ENCODE measurements at regions of chr6 and their contacts with region 1.

Region 1: GRCh38 chr6:143842902-143843676 is at the start of gene LTV1:
- DNase-seq: peak; percentile 95 to 100 (median 98)

Region 2: DNA sequence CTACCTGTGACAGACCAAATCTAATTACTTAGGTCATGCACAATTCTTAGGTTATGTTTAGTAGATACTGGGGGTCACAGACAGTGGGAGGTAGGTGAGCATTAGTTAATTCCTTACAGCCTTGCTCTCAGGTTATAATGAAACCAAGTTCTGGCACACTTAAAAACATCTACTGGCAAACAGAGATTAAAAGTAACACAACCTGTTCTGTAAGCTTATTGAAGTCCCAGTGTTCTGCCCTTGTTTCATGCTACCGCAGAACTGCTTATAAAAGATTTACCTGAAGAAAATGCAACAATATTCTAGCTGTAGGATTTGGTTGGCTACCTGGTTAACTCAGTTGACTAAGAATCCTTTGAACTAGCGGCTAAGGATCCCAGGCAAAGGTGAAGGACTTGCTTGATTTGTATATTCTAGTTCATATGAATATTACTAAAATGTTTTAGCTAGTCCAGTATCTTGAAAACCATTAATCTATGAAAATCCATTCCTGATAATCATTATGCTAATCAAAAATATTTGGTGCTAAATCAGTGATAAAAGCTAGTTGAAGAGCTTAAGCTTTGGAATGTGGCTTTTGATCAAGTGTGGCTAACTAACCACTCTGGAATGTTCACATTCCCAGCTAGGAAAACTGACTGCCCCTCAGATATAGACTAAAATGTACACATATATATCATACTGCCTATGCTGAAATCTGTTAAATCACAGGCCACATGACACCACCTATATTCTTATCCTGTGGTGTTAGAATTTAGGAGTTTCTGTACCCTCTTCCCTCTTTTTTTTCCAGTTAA is 385.3 kb before region 1 on chr6:
- intact Hi-C with region 1: no loop called
- DNase-seq: no peak

Region 3: DNA sequence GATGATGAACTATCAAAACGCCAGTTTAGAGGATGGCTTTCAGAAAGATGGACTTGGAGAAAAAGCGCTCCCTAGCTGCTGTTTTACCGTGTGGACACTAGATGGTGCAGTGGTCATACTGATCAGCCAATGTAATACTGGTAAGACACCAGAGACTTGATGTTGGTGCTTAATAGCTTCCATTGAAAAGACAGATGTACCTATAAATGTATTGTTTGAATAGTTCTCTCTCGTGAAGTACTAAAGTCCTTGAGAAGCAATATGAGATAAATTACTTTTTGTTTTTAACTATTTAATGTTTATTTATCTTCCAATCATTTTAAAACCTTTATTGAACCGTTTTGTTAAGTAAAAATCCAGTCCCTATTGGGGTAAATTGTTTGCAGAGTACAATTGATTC is 267.6 kb before region 1 on chr6:
- intact Hi-C with region 1: loop called (anchors 10 kb)
- DNase-seq: peak in 4 of 10 donors; percentile 27 to 63 (median 43)

Region 4: DNA sequence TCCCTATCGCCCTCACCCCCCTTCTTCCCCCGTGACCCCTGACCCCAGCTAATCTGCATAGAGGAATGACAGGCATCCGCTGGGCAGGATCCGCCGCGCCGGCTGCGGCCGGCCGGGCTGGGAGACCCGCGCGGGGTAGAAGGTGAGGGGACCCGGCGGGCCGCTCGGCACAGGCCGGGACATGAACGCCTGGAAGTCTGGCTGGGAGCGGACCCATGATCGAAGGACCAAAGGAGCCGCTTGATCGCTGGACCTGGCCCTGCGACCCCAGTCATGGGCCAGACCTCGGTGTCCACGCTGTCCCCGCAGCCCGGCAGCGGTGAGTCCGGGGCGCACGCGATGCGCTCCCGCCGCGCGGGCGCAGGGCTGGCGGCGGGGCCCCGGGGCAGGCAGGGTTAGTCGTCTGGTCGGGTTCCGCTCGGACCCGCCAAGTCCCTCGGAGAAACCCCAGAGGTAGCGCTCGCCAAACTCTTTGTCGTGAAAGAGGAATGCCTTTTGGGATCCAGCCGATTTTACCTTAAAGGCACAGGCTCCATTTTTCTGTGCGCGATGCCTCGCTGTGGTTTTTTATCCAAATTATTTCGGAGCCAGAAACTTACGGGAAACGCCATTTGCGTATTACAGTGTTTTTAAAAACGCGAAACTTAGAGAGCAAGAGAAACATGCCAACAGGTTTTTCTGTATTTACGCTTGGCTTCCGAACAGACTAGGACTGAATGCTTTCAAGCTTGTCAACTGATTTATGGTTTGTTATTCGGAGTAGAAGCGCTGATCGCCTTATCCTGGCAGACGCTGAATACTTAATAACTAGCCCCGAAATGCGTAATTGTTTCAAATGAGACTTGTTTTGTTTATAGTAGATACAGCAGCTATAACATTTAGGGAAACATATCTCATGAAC is 164.9 kb before region 1 on chr6 and contains the start of gene PHACTR2:
- intact Hi-C with region 1: loop called (anchors 5 kb)
- DNase-seq: peak in 9 of 10 donors; percentile 30 to 90 (median 38)

Region 5: DNA sequence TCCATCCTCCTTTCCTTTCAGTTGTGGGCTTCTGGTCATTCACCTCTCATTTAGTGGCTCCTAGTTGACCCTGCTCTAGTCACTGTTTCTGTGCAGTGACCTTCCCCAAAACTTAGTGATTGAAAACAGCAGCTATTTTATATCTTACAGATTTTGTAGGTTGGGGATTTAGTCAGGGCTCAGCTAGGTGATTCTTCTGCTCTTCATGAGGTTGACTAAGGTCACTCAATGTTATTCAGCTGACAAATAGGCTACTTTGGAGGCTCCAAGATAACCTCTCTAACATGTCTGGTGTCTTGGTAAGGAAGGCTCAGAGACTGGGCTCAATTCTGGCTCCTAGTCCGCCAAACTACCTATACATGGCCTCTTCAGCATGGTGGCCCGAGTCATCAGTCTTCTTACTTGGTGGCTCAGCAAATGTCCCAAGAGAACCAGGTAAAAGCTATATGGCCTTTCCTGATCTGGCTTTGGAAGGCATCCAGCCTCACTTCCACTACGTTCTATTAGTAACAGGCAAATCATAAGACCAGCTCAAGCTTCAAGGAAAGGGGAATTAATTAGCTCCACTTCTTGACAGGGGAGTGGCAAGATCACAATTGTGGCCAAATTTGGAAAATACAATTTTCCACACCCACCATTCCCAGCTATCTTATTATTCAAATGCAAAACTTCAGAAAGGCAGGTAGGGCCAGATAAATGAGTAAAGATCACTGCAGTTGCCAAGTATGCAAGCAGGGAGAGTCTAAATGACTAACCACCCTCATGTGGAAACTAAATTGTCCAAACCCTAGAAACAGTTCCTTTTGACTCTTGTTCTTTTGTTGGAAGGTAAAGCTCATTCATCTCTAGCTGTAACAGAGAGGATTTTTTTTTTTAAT is 50.4 kb before region 1 on chr6:
- intact Hi-C with region 1: no loop called
- DNase-seq: no peak

Region 6: DNA sequence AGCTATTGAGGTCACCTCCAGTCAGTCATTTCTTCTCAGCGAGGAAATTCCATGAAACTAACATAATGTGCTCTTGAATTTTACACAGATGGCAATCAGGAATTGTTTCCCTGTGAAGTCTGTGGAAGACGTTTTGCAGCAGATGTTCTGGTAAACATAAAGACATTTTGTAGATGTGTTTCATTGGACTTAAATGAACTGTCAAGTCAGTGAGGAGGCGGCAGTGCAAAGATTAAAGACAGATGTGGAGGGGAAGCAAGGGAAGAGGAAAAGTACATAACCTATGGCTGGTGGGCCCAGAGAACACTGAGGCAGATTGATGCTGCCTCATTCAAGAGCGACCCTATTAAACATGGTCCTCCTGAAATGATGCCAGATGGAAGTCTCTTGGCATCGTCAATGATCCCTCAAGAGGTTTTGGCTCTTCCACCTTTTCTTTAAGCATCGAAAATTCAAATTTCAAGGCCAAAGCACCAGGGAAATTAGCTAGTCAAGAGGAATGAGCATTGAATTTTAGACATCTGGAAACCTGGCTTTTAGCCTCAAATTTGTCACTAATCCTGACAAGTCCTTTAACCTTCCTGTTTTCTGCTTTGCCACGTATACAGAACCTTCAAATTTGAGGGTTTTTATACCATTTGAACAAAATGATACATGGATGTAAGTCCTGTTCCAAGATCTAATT is 41.3 kb after region 1 on chr6:
- intact Hi-C with region 1: no loop called
- DNase-seq: no peak

Region 7: DNA sequence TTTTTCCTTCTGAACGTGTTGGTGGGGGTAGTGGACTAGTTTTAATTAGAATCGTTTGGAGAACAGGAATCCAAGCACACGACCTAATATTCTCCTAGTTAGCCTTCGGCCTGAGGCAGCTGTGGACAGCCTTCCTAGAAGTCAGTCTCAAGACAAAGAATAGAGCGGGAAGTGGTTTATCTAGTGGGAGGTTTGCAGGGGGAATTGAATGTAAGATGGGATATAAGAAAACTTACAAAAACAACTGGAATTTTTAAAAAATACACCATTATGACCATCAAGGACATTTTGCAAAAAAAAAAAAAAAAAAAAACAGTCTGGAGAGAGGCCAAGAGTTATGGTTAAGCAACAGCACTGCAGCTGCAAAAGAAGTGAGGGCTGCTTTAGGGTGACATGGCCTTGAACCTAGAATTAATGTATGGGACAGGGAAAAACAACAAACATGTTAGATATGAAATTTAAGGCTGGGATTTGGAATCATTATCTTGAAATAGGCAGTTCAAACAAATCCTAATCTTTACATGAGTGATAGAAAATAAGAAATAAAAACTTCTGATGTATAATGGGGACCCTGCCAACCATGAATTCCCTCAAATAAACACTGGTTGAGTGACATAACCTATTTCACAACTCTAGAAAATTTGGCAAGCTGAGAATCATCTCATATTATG is 124.8 kb after region 1 on chr6:
- intact Hi-C with region 1: no loop called
- DNase-seq: no peak

Region 8: DNA sequence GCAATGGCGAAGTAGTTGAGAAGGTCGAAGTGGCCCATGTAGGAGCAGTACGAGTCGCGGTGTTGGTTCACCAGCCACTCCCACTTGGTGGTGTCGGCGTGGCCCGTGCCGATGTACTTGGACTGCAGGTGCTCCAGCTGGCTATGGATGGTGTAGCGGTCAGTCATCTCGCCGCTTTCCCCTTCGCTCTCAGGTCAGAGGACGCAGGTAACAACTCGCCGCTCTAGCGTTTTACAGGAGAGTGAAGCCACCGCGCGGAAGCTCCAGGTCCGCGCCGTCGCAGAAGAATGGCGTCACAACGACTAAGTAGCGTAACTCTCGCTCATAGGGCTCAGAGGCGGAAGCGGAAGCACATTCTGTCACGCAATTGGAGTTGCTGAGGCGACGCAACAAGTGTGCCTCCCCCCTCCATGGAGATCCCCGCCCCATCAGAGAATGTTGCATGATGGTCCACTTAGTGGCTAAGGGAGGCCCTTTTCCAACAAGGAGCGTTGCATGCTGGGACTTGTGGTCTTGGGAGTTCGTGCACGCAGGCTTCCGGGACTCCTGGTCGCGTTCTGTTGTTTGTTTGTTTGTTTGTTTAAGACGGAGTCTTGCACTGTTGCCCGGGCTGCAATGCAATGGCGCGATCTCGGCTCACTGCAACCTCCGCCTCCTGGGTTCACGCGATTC is 252.4 kb after region 1 on chr6 and contains the start of gene SF3B5:
- intact Hi-C with region 1: loop called (anchors 10 kb)
- DNase-seq: peak; percentile 96 to 100 (median 98)